HepG2 (cell line): ENCODE measurements at regions of chr7 and their contacts with region 1.

Region 1: GRCh38 chr7:154927624-154928143 is 75.2 kb downstream of the PAXIP1 start:
- DNase-seq: peak; percentile 83
- ATAC-seq: peak; percentile 71
- H3K4me3 ChIP-seq: peak overlapping the region; percentile 64 to 80 (median 75)
- H3K27ac ChIP-seq: peak overlapping the region; percentile 45
- H3K4me1 ChIP-seq: peaks cover 9% of the 10 kb centered on the region
- H3K27me3 ChIP-seq: no peaks in the 10 kb centered on the region; a peak in 1 of 5 replicates
- CTCF ChIP-seq: peak; percentile 75
- EP300 ChIP-seq: no peak
- POLR2A ChIP-seq: no peak
- RAD21 ChIP-seq: peak; percentile 54

Region 2: DNA sequence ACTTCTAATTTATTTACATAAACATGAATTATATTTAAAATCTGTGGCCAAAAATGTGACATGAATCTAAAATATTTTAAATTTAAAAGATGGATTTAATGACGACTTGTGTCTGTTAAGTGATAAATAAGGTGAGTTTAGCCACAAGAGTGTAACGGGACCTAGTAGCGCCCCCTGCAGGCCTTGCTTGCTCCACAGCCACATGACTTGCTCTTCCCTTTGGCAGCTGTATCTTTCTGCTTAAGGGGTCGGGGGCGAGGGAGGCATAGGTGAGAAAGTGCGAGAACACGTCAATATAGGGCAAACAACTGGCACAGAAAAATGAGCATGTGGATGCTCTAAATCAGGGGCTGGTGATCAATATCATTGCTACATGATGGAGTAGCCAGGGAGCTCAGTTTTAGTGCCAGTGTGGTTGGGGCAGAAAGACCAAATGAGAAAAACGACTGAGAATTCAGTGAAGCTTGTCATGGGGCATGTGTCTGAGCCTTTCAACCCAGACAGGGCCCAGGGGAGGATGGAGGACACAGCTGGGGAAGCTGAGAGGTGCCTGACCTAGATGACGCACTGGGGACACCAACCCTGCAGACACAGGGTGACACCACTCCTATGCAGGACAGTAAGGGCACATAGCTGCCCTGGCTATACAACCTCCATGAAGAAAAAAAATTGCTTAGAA is 25.5 kb after region 1 on chr7:
- CTCF ChIA-PET with region 1: interaction called, 22 read pairs
- POLR2A ChIA-PET with region 1: no interaction called
- in situ Hi-C with region 1: no loop called
- intact Hi-C with region 1: loop called (anchors 1 kb)
- DNase-seq: peak; percentile 38
- ATAC-seq: peak; percentile 81
- H3K4me3 ChIP-seq: no peak overlapping the region
- H3K27ac ChIP-seq: no peak overlapping the region
- H3K4me1 ChIP-seq: peaks cover 6% of the 10 kb centered on the region; the same call in 1 of the 2 replicates
- H3K27me3 ChIP-seq: no peaks in the 10 kb centered on the region
- CTCF ChIP-seq: peak; percentile 64
- EP300 ChIP-seq: no peak
- POLR2A ChIP-seq: no peak
- RAD21 ChIP-seq: no peak

Region 3: GRCh38 chr7:155009570-155010157 is 82.0 kb after region 1 on chr7:
- CTCF ChIA-PET with region 1: interaction called, 6 read pairs
- POLR2A ChIA-PET with region 1: no interaction called
- in situ Hi-C with region 1: no loop called
- intact Hi-C with region 1: loop called (anchors 1 kb)
- DNase-seq: peak; percentile 18
- ATAC-seq: peak; percentile 70
- H3K4me3 ChIP-seq: no peak overlapping the region
- H3K27ac ChIP-seq: no peak overlapping the region
- H3K4me1 ChIP-seq: peaks cover 5% of the 10 kb centered on the region
- H3K27me3 ChIP-seq: 0 out of 5 replicates have a peak, but pooled peaks cover 0 to 3% of the 10 kb centered on the region in 2 experiments
- CTCF ChIP-seq: peak; percentile 40
- EP300 ChIP-seq: no peak
- POLR2A ChIP-seq: no peak
- RAD21 ChIP-seq: no peak

Region 4: DNA sequence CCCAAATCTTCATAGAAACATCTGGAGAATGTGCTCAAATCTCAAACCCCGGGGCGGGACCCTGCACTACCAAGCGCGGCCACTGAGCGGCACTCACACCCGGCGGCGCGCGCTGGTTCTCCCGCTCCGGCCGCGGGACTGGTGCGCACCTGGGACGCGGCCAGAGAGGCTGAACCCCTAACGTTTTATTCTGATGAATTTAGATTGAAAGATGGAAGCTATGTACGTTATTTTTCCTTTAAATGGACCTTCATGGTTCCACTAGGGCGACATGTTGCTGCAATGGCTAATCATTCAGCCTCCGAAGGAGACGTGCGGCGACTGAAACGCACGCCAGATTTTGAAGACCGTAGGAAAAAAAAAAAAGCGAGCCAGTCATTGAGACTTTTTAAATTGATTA is 263.0 kb after region 1 on chr7:
- CTCF ChIA-PET with region 1: no interaction called
- POLR2A ChIA-PET with region 1: no interaction called
- in situ Hi-C with region 1: no loop called
- intact Hi-C with region 1: loop called (anchors 5 kb)
- DNase-seq: no peak
- ATAC-seq: peak; percentile 77
- H3K4me3 ChIP-seq: no peak overlapping the region
- H3K27ac ChIP-seq: no peak overlapping the region
- H3K4me1 ChIP-seq: no peaks in the 10 kb centered on the region
- H3K27me3 ChIP-seq: peaks cover 2 to 43% of the 10 kb centered on the region in 2 experiments; a peak in 3 of 5 replicates
- CTCF ChIP-seq: peak; percentile 74
- EP300 ChIP-seq: no peak
- POLR2A ChIP-seq: no peak
- RAD21 ChIP-seq: peak; percentile 68

Region 5: DNA sequence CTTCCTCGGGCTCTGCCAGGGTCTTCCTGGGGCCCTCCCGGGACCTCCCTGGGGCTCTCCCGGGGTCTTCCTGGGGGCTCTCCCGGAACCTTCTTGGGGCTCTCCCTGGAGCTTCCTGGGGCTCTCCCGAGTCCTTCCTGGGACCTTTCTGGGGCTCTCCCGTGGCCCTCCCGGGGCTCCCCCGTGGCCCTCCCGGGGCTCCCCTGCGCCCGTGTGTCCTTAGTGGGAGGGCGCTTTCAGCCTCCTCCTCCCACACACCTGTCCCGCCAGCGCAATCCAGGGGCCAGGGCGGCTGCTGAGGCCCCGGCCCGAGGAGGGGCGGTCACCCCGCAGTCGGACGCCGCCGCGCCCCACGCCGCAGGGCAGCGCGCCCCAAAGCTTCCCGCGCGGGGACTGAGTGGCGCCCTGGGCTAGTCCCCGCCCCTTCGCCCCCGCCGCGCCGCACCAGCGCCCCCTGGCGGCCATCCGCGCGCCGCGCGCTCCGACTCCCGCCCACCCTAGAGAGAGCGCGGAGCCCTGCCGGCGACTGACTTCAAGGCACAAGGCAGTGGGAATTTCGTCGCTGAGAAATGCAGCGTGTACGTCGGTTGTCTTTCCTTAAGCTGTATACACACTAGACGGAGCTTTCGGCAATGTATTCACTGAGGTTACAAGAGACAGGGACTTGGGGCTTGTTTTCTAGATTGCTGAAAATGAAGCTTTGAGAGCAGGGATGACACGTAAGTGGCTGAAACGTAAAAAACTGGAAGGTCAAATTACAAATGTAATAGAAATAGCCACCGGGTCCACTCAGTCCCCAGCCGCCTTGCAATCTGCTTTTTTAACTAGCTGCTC is 417.1 kb after region 1 on chr7:
- CTCF ChIA-PET with region 1: interaction called, 22 read pairs
- POLR2A ChIA-PET with region 1: no interaction called
- in situ Hi-C with region 1: no loop called
- intact Hi-C with region 1: loop called (anchors 1 kb)
- DNase-seq: peak; percentile 21
- ATAC-seq: peak; percentile 96
- H3K4me3 ChIP-seq: peak overlapping the region in 1 of 3 experiments; percentile 60; a peak in 2 of 6 replicates
- H3K27ac ChIP-seq: no peak overlapping the region
- H3K4me1 ChIP-seq: peaks cover 7% of the 10 kb centered on the region; the same call in 1 of the 2 replicates
- H3K27me3 ChIP-seq: peaks cover 0 to 23% of the 10 kb centered on the region in 2 experiments; a peak in 4 of 5 replicates
- CTCF ChIP-seq: peak; percentile 78
- EP300 ChIP-seq: no peak
- POLR2A ChIP-seq: no peak
- RAD21 ChIP-seq: peak; percentile 79

Region 6: DNA sequence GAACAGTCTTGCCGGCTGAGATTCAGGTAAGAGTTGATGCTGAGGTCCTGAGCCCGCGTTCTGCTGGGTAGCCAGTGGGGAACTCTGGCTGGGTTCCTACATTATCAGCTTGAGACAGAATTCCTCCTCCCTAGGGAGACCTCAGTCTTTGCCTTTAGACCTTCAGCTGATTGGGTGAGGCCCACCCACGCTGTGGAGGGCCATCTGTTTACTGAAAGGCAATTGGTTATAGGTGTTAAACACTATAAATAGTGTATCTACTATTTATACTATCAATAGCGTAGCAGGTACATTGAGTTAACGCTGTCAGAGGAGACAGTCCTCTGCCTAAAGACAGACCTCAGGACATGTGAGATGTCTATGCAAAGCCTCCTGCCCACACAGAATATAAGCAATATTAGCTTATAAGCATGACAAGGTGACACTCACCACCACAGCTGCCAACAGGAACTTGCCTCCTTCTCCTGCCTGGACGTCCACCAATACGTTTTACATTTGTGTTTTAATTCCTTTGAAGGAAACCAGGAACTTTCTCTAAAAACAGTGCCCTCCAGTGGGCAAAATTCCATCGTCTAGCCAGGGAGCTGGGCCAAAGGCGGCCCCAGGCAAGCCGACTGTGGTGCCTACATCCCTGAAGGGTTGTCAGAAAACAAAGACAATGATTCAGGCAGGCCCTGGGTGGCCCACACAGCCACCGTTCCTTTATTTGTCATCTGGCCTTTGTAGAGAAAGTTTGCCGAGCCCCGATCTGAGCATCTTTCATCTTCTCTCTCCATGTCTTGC is 428.8 kb after region 1 on chr7:
- CTCF ChIA-PET with region 1: interaction called, 11 read pairs
- POLR2A ChIA-PET with region 1: no interaction called
- in situ Hi-C with region 1: loop called (anchors 5 kb)
- intact Hi-C with region 1: no loop called
- DNase-seq: peak; percentile 7
- ATAC-seq: peak; percentile 66
- H3K4me3 ChIP-seq: no peak overlapping the region
- H3K27ac ChIP-seq: no peak overlapping the region
- H3K4me1 ChIP-seq: no peaks in the 10 kb centered on the region
- H3K27me3 ChIP-seq: peaks cover 4 to 59% of the 10 kb centered on the region in 2 experiments; a peak in 4 of 5 replicates
- CTCF ChIP-seq: peak; percentile 39
- EP300 ChIP-seq: no peak
- POLR2A ChIP-seq: no peak
- RAD21 ChIP-seq: no peak